ENCODE measurements at regions of chr2 and their contacts with region 1.

Region 1: GRCh38 chr2:85288244-85288725 is 39.5 kb downstream of the TGOLN2 start:
- H3K4me3 Mint-ChIP-seq: no peak overlapping the region
- H3K27ac Mint-ChIP-seq: no peak overlapping the region
- H3K4me1 Mint-ChIP-seq: peaks cover 11% of the 10 kb centered on the region
- H3K27me3 Mint-ChIP-seq: peaks cover 1% of the 10 kb centered on the region

Region 2: DNA sequence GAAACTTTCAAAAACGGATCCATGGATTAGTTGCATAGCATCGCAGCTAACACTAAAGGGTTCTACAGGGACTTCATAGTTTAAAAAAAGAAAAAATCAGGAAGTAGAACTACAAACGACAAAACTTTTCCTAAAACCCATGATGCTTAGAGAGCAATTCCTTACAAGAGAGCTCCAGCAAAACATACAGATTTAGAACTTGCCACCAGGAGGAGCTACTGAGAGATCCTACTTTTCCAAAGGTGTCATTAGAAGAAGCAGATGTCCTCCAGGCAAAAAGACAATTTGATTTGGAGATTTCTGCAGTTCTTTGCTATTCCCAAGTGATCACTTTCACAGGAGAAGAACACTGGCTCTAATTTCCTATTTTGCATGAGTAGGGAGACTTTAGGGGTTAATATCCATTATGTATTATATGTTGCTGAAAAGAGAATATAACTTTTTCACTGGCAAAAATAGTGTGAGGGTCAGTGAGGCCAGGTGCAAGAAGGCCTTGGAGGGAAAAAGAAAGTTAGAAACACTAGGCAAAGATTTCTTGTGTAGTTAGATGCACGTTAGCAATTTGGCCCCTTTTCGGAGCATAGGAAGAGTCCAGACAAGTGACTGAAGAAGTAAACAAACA is 1265.4 kb before region 1 on chr2:
- intact Hi-C with region 1: loop called (anchors 10 kb)
- H3K4me3 Mint-ChIP-seq: no peak overlapping the region
- H3K27ac Mint-ChIP-seq: no peak overlapping the region
- H3K4me1 Mint-ChIP-seq: no peaks in the 10 kb centered on the region
- H3K27me3 Mint-ChIP-seq: no peaks in the 10 kb centered on the region

Region 3: DNA sequence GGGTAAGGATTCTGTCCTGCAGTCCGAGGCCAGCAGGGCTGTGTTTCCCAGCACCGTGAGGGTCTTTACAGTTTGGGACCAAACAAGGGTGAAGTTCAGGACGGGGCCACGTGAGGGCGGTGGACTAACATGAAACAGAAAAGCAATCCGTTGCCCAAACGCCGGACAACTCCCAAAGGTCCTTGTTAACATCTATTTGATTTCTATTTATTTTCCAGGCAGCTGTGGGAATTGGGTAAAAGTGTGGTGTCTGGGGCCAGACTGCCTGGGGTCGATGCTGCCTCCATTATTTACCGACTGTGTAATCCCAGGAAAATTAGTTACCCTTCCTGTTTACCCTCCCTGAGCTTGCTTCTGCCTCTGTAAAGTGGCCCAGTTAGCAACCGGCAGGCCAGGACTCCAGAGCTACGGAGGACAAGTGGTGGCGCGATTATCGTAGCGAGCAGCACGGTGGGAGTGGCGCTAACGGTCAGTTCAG is 221.4 kb before region 1 on chr2:
- intact Hi-C with region 1: loop called (anchors 1 kb)
- H3K4me3 Mint-ChIP-seq: peak overlapping the region; percentile 37
- H3K27ac Mint-ChIP-seq: no peak overlapping the region
- H3K4me1 Mint-ChIP-seq: peaks cover 5% of the 10 kb centered on the region
- H3K27me3 Mint-ChIP-seq: peaks cover 10% of the 10 kb centered on the region

Region 4: GRCh38 chr2:85132834-85133637 is 155.2 kb before region 1 on chr2 and contains the start of gene TCF7L1:
- intact Hi-C with region 1: loop called (anchors 5 kb)
- H3K4me3 Mint-ChIP-seq: peak within 1 kb of the TSS; percentile 69
- H3K27ac Mint-ChIP-seq: no peak within 1 kb of the TSS
- H3K4me1 Mint-ChIP-seq: peaks cover 9% of the 10 kb centered on the region
- H3K27me3 Mint-ChIP-seq: peaks cover 68% of the 10 kb centered on the region

Region 5: DNA sequence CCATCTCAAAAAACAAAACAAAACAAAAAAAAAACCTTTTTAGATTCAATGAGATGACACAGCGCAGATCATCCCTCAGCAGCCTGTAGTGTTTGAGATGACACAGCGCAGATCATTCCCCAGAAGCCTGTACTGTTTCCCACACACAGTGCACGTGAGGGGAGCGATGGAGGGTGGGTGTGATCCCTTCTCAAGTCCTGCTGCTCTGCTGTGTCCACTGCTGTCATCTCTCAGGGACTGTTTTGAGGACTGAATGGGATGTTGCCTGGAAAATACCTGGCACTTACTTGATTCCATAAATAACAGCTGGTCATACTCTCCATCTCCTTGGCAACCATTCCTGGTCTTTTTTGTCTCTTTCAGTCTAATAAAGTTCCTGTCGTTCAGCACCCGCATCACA is 13.8 kb after region 1 on chr2:
- intact Hi-C with region 1: no loop called
- H3K4me3 Mint-ChIP-seq: no peak overlapping the region
- H3K27ac Mint-ChIP-seq: no peak overlapping the region
- H3K4me1 Mint-ChIP-seq: peaks cover 6% of the 10 kb centered on the region
- H3K27me3 Mint-ChIP-seq: peaks cover 25% of the 10 kb centered on the region

Measured in dendritic cell treated with granulocyte-macrophage colony-stimulating factor and Interleukin-4, amounts not matched to agents 40 ng/mL and 50 ng/mL, for 4 days (primary cell).